ENCODE measurements at regions of chr14 and their contacts with region 1.

Region 1: GRCh38 chr14:91350813-91351511 is 66.7 kb downstream of the CCDC88C start:
- DNase-seq: peak in 8 of 14 experiments; percentile 30 to 91 (median 54)
- ATAC-seq: peak; percentile 65
- H3K4me3 ChIP-seq: peak overlapping the region; percentile 47
- H3K4me3 Mint-ChIP-seq: peak overlapping the region; percentile 89
- H3K27ac ChIP-seq: peak overlapping the region; percentile 77 to 81
- H3K27ac Mint-ChIP-seq: peak overlapping the region; percentile 94
- H3K4me1 ChIP-seq: peaks cover 91% of the 10 kb centered on the region
- H3K4me1 Mint-ChIP-seq: peaks cover 89% of the 10 kb centered on the region
- H3K27me3 ChIP-seq: no peaks in the 10 kb centered on the region
- H3K27me3 Mint-ChIP-seq: no peaks in the 10 kb centered on the region
- CTCF ChIP-seq: no peak

Region 2: DNA sequence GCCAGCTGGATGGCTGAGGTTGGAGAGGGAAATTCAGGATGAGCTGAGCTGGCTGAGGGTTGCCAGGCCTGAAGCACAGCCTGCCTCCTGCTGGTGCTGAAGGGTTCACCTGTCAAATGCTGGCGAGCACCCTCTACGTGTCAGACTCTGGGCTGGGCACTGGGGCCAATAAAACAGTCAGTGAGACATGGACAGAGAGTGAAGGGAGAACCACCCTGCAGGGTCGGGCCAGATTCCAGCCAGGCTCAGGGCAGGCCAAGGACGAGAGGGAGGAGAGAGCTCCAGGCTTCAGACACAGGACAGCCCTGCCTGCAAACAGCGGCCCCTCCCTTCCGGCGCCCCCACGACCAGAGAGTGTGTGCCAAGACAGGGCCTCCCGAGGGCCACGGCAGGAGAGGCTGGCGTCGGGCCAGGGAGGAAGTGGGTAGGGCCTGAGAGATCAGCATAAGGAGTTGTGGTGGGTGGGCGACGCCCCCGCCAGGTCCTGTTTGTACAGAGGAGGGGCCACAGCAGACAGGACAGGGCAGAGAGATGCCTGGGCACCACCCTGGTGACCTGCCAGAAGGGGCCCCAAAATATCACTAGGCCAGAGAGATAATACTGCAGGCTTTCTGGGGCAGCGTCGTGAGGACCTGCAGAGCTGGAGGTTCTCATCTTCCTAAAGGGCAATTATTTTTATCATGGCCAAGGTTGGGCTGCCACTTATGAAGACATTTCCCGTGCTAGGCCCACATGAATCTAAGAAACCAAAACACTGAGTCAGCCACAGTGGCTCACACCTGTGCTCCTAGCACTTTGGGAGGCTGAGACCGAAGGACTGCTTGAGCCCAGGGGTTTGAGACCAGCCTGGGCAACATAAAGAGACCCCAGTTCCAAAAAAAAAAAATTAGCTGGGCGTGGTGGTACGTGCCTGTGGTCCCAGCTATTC is 33.3 kb before region 1 on chr14:
- CTCF ChIA-PET with region 1: interaction called, 8 read pairs
- POLR2A ChIA-PET with region 1: interaction called, 35 read pairs
- intact Hi-C with region 1: loop called in 1 of 2 experiments (anchors 2 kb)
- DNase-seq: peak; percentile 56 to 94 (median 85)
- ATAC-seq: peak; percentile 52
- H3K4me3 ChIP-seq: peak overlapping the region; percentile 1
- H3K4me3 Mint-ChIP-seq: peak overlapping the region; percentile 85
- H3K27ac ChIP-seq: peak overlapping the region; percentile 89 to 91
- H3K27ac Mint-ChIP-seq: peak overlapping the region; percentile 97
- H3K4me1 ChIP-seq: peaks cover 99% of the 10 kb centered on the region
- H3K4me1 Mint-ChIP-seq: peaks cover 77% of the 10 kb centered on the region
- H3K27me3 ChIP-seq: no peaks in the 10 kb centered on the region
- H3K27me3 Mint-ChIP-seq: no peaks in the 10 kb centered on the region
- CTCF ChIP-seq: peak; percentile 36

Region 3: DNA sequence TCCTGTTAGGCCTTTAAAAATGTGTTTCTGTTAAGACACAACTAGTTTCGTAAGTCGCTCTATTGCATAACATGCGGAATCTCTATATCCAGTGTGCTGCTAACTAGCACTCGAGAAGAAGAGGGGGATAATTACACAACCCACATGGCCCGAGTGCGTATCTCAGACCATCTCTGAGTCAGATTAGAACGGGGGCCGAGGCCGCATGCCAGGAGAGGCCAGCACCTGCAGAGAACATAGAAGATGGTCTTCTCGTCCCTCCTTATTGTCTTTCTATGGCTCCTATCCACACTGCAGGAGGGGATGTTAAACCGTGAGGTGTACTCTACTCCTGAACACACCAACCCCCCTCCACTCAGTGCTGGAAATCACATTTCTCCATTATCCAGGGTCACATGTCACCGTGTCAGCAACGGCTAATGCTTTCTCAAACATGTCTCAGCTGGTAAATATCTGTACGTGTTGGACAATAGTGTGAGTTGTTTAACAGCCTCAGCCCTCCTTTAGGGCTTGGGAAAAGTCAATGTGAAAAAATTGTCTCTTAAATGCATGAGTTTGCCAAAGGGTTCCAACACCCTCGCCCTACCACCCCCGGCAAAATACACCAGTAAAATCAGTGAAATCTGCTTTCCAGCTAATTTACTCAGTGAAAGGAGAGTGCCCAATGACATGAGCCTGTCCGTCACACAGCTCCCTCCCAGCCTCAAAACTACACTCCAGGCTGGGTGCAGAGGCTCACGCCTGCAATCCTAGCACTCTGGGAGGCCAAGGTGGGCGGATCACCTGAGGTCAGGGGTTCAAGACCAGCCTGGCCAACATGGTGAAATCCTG is 10.5 kb after region 1 on chr14:
- CTCF ChIA-PET with region 1: interaction called, 4 read pairs
- POLR2A ChIA-PET with region 1: interaction called, 23 read pairs
- intact Hi-C with region 1: loop called in 1 of 2 experiments (anchors 2 kb)
- DNase-seq: peak in 2 of 14 experiments; percentile 61 to 64
- ATAC-seq: no peak
- H3K4me3 ChIP-seq: no peak overlapping the region
- H3K4me3 Mint-ChIP-seq: no peak overlapping the region
- H3K27ac ChIP-seq: no peak overlapping the region
- H3K27ac Mint-ChIP-seq: peak overlapping the region; percentile 73
- H3K4me1 ChIP-seq: peaks cover 98% of the 10 kb centered on the region
- H3K4me1 Mint-ChIP-seq: peaks cover 79% of the 10 kb centered on the region
- H3K27me3 ChIP-seq: no peaks in the 10 kb centered on the region
- H3K27me3 Mint-ChIP-seq: no peaks in the 10 kb centered on the region
- CTCF ChIP-seq: no peak

Region 4: DNA sequence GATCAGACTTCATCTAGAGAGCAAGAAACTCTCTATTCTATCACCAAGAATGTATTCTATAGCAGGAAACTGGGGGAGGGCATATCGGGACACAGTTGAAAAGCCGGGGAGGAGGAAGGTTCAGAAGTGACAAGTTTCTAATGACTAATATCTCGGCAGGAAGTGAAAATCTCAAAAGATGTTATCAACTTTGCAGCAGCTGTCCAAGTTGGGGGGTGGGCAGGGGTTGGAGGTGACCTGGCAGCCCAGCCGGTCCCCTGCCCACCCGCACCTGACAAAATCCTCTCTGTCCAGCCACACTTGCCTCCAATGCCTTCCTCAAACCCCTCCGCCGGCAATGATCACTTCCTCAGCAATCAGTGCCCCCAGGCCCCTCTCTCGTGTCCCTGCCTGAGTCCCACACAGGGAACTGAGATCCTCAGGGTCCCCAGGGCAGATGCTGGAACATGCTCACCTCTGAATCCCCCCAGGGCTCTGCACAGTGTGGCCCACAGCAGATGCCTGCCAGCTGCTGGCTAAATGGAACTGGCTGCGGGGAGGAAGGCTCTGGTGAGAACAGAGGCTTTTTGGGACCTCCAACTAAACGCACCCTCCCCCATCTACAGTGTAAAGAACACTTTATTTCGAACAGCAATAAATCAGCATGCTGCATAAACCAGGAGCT is 22.8 kb after region 1 on chr14:
- CTCF ChIA-PET with region 1: interaction called, 5 read pairs
- POLR2A ChIA-PET with region 1: interaction called, 37 read pairs
- intact Hi-C with region 1: loop called in 1 of 2 experiments (anchors 2 kb)
- DNase-seq: peak in 9 of 14 experiments; percentile 47 to 82 (median 61)
- ATAC-seq: peak; percentile 64
- H3K4me3 ChIP-seq: peak overlapping the region; percentile 43
- H3K4me3 Mint-ChIP-seq: peak overlapping the region; percentile 90
- H3K27ac ChIP-seq: peak overlapping the region; percentile 69 to 80
- H3K27ac Mint-ChIP-seq: peak overlapping the region; percentile 96
- H3K4me1 ChIP-seq: peaks cover 100% of the 10 kb centered on the region
- H3K4me1 Mint-ChIP-seq: peaks cover 100% of the 10 kb centered on the region
- H3K27me3 ChIP-seq: no peaks in the 10 kb centered on the region
- H3K27me3 Mint-ChIP-seq: no peaks in the 10 kb centered on the region
- CTCF ChIP-seq: no peak

Region 5: GRCh38 chr14:91402771-91403600 is 52.0 kb after region 1 on chr14:
- CTCF ChIA-PET with region 1: interaction called, 7 read pairs
- POLR2A ChIA-PET with region 1: interaction called, 33 read pairs
- intact Hi-C with region 1: no loop called
- DNase-seq: peak in 1 of 14 experiments; percentile 27
- ATAC-seq: no peak
- H3K4me3 ChIP-seq: peak overlapping the region; percentile 17
- H3K4me3 Mint-ChIP-seq: peak overlapping the region; percentile 81
- H3K27ac ChIP-seq: peak overlapping the region; percentile 70 to 85
- H3K27ac Mint-ChIP-seq: peak overlapping the region; percentile 98
- H3K4me1 ChIP-seq: peaks cover 98% of the 10 kb centered on the region
- H3K4me1 Mint-ChIP-seq: peaks cover 90% of the 10 kb centered on the region
- H3K27me3 ChIP-seq: no peaks in the 10 kb centered on the region
- H3K27me3 Mint-ChIP-seq: no peaks in the 10 kb centered on the region
- CTCF ChIP-seq: no peak

Measured in CD4-positive, alpha-beta T cell (primary cell).